Sigmoid colon (tissue), 7 donors: ENCODE measurements at regions of chr5 and their contacts with region 1.

Region 1: DNA sequence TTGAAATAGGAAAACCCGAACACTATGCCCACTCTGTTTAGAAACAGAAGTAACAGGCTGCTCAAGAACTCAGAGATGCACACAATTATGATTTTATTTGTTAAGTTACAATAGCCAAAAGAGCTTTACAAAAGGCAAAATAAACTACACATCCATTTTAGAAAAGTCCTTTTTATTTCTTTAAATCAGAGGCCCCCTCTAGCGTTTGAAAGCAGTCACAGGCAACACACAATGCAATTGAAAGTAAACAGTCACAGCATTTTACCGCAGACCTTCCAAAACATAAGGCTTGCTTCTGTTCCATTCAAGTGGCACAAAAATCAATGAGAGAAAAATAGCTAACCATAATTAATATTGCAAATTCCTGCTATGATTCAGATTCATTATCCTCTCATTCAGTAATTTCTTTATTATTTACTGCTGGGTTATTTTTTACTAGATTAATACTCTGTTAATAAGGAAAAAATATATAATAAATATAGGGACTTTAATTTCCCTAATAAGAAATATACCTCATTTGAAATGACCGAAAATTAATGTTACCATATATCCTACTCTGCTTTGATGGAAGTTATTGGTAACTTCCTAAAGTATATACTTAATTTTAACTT is 78.3 kb downstream of the CEP120 start:
- DNase-seq: no peak
- H3K4me3 ChIP-seq: no peak overlapping the region
- H3K27ac ChIP-seq: no peak overlapping the region
- H3K4me1 ChIP-seq: peaks cover 0 to 19% (median 4%) of the 10 kb centered on the region in 4 donors
- H3K27me3 ChIP-seq: no peaks in the 10 kb centered on the region
- CTCF ChIP-seq: peak; percentile 57 to 74 (median 67)
- EP300 ChIP-seq: no peak
- POLR2A ChIP-seq: no peak

Region 2: GRCh38 chr5:122896598-122897282 is 448.2 kb before region 1 on chr5:
- intact Hi-C with region 1: loop called (anchors 1 kb)
- DNase-seq: no peak
- H3K4me3 ChIP-seq: no peak overlapping the region
- H3K27ac ChIP-seq: no peak overlapping the region
- H3K4me1 ChIP-seq: peaks cover 0 to 7% (median 3%) of the 10 kb centered on the region in 4 donors
- H3K27me3 ChIP-seq: no peaks in the 10 kb centered on the region
- CTCF ChIP-seq: peak in 3 of 4 experiments; percentile 26 to 63 (median 55)
- EP300 ChIP-seq: no peak
- POLR2A ChIP-seq: no peak

Region 3: GRCh38 chr5:123094919-123095797 is 249.8 kb before region 1 on chr5:
- intact Hi-C with region 1: loop called (anchors 2 kb)
- DNase-seq: peak; percentile 72
- H3K4me3 ChIP-seq: peak overlapping the region; percentile 26 to 79 (median 74)
- H3K27ac ChIP-seq: peak overlapping the region in 3 of 4 donors; percentile 83 to 88 (median 83)
- H3K4me1 ChIP-seq: peaks cover 0 to 39% (median 20%) of the 10 kb centered on the region in 4 donors
- H3K27me3 ChIP-seq: peaks cover 0 to 56% (median 0%) of the 10 kb centered on the region in 3 donors
- CTCF ChIP-seq: peak in 2 of 4 experiments; percentile 43 to 55
- EP300 ChIP-seq: no peak
- POLR2A ChIP-seq: no peak

Region 4: GRCh38 chr5:123294544-123294943 is 50.4 kb before region 1 on chr5:
- intact Hi-C with region 1: loop called (anchors 5 kb)
- DNase-seq: no peak
- H3K4me3 ChIP-seq: no peak overlapping the region
- H3K27ac ChIP-seq: no peak overlapping the region
- H3K4me1 ChIP-seq: peaks cover 0 to 10% (median 3%) of the 10 kb centered on the region in 4 donors
- H3K27me3 ChIP-seq: no peaks in the 10 kb centered on the region
- CTCF ChIP-seq: no peak
- EP300 ChIP-seq: no peak
- POLR2A ChIP-seq: no peak